Activated T-helper 1 cell treated with anti-CD3 and anti-CD28 coated beads, Interleukin-12 subunit alpha, Interleukin-12 subunit beta, Interleukin-2, Interleukin-4 antibody, amounts not matched to agents 30 ng/mL and 10 ng/mL and 1 ng/mL, durations not matched to agents 14 hours and 24 hours and 36 hours (primary cell): ENCODE measurements at regions of chr1 and their contacts with region 1.

Region 1: GRCh38 chr1:114757455-114758250 is at the start of gene CSDE1:
- DNase-seq: peak; percentile 96
- H3K4me3 Mint-ChIP-seq: peak within 1 kb of the TSS; percentile 99
- H3K27ac Mint-ChIP-seq: peak within 1 kb of the TSS; percentile 100
- H3K4me1 Mint-ChIP-seq: peaks cover 42% of the 10 kb centered on the region
- H3K27me3 Mint-ChIP-seq: no peaks in the 10 kb centered on the region
- total RNA-seq, gene CSDE1: 398 and 421 TPM in 2 replicates

Region 2: DNA sequence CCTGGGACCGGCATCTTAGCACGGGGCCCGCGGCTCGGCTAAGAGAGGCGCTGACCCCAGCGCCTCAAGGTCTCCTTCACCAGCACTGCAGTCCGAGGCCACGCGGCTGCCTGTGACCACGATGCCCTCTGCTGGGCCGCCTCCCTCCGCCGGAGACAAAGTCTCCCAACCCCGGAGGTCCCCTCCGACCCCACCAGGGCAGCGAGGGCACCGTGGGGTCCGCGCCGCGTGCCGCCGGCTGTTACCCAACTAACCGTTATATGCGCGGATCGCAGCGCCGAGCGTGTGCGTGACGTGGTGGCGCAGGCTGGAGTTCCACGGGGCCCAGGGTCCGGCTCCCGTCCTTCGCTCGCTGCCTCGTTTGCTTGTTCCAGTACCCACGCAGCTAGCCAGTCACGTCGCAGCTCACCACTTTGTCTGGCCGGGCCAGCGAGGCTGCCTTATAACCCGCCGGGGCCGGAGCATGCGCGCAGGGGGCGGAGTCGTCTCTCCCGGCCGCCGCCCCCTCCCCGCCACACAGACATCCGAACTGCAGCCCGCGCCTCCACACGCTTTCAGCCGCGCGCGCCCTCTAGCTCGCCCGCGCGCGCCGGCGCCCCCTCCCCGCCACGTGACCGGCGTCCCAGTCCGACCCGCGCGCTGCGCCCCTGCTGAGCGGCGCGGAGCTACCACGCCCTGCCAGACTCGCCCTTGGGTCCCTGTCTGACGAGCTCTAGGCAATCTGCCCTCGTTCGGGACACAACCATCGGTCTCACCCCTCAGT is 1801.7 kb before region 1 on chr1 and contains the start of gene SLC16A1:
- intact Hi-C with region 1: loop called (anchors 2 kb)
- DNase-seq: peak; percentile 90
- H3K4me3 Mint-ChIP-seq: peak within 1 kb of the TSS; percentile 90
- H3K27ac Mint-ChIP-seq: peak within 1 kb of the TSS; percentile 100
- H3K4me1 Mint-ChIP-seq: peaks cover 59% of the 10 kb centered on the region
- H3K27me3 Mint-ChIP-seq: no peaks in the 10 kb centered on the region
- total RNA-seq, gene SLC16A1: 73.6 and 77.4 TPM in 2 replicates

Region 3: GRCh38 chr1:113904674-113905434 is 852.8 kb before region 1 on chr1 and contains the starts of genes AP4B1 and DCLRE1B:
- intact Hi-C with region 1: loop called (anchors 1 kb)
- DNase-seq: peak; percentile 98
- H3K4me3 Mint-ChIP-seq: peak within 1 kb of the TSS; percentile 99
- H3K27ac Mint-ChIP-seq: peak within 1 kb of the TSS; percentile 95
- H3K4me1 Mint-ChIP-seq: peaks cover 58% of the 10 kb centered on the region
- H3K27me3 Mint-ChIP-seq: no peaks in the 10 kb centered on the region
- total RNA-seq, gene AP4B1: 36.3 and 40.9 TPM in 2 replicates
- total RNA-seq, gene DCLRE1B: 20.9 and 21.2 TPM in 2 replicates

Region 4: GRCh38 chr1:114511032-114511785 is 246.4 kb before region 1 on chr1 and contains the start of gene TRIM33:
- intact Hi-C with region 1: loop called (anchors 1 kb)
- DNase-seq: peak; percentile 92
- H3K4me3 Mint-ChIP-seq: peak within 1 kb of the TSS; percentile 93
- H3K27ac Mint-ChIP-seq: peak within 1 kb of the TSS; percentile 98
- H3K4me1 Mint-ChIP-seq: peaks cover 45% of the 10 kb centered on the region
- H3K27me3 Mint-ChIP-seq: peaks cover 1% of the 10 kb centered on the region
- total RNA-seq, gene TRIM33: 39.2 and 41.7 TPM in 2 replicates

Region 5: DNA sequence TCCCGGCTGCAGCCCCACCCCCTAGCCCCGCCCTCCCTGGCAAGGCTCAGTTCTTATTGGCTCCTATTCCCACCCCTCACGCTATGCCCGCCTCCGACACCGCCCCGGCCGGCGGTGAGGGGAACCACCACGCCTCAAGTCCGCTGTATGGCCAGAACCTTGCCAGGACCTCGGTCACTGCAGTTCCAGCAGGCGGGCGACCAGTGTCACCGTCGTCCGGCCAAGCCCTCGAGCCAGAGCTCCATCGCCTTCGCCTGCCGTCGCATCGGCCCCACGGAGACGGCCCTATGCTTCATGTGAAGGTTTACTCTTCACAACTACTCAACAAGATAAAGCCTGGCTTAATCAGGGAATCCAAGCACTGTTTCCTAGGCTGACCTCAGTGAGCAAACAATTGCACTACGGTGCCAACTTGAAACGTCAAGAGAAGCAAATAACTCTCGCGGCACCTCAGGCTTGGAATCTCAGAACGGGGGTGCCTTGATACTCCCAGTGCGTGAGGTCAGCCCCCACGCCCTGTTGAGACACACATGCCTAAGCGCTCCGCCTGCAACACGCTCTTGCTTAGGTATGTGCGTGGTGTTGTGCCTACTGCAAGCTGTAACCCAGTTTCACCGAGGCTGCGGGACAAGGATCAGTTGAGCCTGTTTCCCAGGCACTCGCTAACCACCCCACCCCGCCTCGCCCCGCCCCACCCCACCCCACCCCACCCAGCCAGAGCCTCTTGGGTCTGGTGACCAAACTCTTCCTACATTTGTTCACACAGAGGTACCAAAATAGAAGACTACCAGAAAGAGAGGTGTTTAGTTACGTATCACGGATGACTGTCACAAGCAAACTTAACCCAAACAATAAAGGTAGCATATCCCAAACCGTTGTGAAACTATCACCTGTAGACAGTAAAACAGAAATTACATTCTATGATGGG is 87.3 kb before region 1 on chr1:
- intact Hi-C with region 1: loop called (anchors 1 kb)
- DNase-seq: peak; percentile 76
- H3K4me3 Mint-ChIP-seq: peak overlapping the region; percentile 89
- H3K27ac Mint-ChIP-seq: peak overlapping the region; percentile 20
- H3K4me1 Mint-ChIP-seq: peaks cover 8% of the 10 kb centered on the region
- H3K27me3 Mint-ChIP-seq: peaks cover 48% of the 10 kb centered on the region

Region 6: GRCh38 chr1:114745291-114745690 is 12.4 kb before region 1 on chr1:
- intact Hi-C with region 1: loop called (anchors 1 kb)
- DNase-seq: no peak
- H3K4me3 Mint-ChIP-seq: no peak overlapping the region
- H3K27ac Mint-ChIP-seq: no peak overlapping the region
- H3K4me1 Mint-ChIP-seq: peaks cover 55% of the 10 kb centered on the region
- H3K27me3 Mint-ChIP-seq: no peaks in the 10 kb centered on the region

Region 7: GRCh38 chr1:114828251-114828650 is 70.6 kb after region 1 on chr1:
- intact Hi-C with region 1: no loop called
- DNase-seq: no peak
- H3K4me3 Mint-ChIP-seq: no peak overlapping the region
- H3K27ac Mint-ChIP-seq: no peak overlapping the region
- H3K4me1 Mint-ChIP-seq: no peaks in the 10 kb centered on the region
- H3K27me3 Mint-ChIP-seq: peaks cover 2% of the 10 kb centered on the region

Region 8: GRCh38 chr1:115098979-115099692 is 341.5 kb after region 1 on chr1:
- intact Hi-C with region 1: loop called (anchors 2 kb)
- DNase-seq: peak; percentile 70
- H3K4me3 Mint-ChIP-seq: peak overlapping the region; percentile 89
- H3K27ac Mint-ChIP-seq: peak overlapping the region; percentile 98
- H3K4me1 Mint-ChIP-seq: peaks cover 30% of the 10 kb centered on the region
- H3K27me3 Mint-ChIP-seq: peaks cover 16% of the 10 kb centered on the region